CD14-positive monocyte (primary cell): ENCODE measurements at regions of chr19 and their contacts with region 1.

Region 1: DNA sequence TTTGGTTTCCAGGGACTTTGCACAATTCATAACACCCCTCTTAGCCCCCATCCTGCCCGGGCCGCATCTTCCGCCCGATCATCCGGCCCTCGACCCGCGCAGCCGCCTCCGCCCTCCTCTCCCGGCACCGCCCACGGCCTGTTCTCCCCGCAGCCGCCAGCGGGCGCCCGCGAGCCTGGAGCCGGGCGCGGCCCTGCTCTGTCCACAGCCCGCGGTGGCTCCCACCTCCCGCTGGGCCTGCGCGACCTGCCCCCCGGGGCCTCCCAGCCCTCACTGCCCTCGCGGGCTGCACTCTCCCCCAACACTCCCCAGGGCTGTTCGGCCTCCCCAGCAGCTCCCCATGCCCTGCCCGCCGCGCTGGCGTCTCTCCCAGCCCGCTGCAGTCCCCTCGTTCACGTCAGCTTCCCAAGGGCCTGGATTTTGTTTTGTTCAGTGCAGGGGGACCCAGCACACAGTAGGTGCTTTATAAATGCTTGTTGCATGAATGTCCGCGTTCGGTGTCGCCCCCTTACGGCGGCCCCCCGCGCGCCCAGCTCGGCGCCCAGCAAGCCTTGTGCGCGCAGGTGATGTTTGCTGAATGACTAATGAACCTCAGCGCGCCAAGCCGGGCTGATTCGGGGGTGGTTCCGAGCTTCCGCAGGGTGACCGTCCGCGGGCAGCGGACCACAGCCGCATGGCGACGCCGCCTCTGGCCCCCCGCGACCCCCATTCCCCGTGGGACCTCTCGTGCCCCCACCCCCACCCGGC is 4.6 kb upstream of the APC2 start:
- DNase-seq: peak; percentile 39 to 61 (median 59)
- H3K4me3 ChIP-seq: peak overlapping the region; percentile 1 to 74 (median 37)
- H3K4me3 Mint-ChIP-seq: peak overlapping the region; percentile 69 to 87
- H3K27ac ChIP-seq: no peak overlapping the region
- H3K27ac Mint-ChIP-seq: no peak overlapping the region
- H3K4me1 ChIP-seq: peaks cover 14 to 32% of the 10 kb centered on the region in 2 donors
- H3K4me1 Mint-ChIP-seq: peaks cover 20% of the 10 kb centered on the region
- H3K27me3 ChIP-seq: peaks cover 33 to 53% of the 10 kb centered on the region in 2 donors
- H3K27me3 Mint-ChIP-seq: peaks cover 40 to 65% (median 44%) of the 10 kb centered on the region in 3 donors
- CTCF ChIP-seq: peak; percentile 96

Region 2: DNA sequence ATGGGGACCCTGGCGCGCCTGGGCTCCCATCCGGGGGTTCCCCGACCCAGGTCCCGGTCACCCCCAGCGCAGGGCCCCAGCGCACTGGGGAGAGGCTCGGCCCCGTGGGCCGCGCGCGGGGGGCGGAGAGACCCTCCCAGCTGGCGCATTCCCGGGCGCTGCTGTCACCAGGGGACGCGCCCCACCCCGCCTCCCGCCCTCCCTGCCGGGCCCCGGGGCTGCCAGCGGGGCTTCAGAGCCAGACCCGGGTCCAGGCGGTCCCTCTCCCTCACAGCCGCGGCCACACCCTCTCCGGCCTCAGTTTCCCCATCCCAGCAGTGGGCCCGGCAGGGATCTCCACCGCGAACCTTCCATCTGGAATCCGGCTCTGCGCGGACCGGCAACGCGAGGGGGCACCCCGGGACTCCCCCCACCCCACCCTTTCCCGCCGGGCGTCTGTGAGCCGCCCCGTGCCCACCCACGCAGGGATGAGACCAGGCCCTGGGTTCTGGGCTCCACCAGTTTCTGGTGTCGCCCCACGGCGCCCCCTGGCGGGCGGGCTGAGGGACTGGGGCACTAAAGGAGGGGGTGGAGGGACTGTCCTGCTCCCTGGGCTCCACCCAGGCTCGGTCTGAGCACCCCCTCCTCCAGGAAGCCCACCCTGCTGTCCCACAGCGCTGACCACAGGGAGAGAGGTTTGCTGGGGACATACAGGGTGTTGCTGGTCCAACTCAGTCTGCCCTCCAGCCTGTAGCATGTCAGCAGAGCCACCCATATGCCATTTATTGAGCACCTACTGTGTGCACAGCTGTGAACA is 68.3 kb after region 1 on chr19:
- intact Hi-C with region 1: loop called in 1 of 2 experiments (anchors 10 kb)
- DNase-seq: peak; percentile 34 to 50 (median 49)
- H3K4me3 ChIP-seq: no peak overlapping the region
- H3K4me3 Mint-ChIP-seq: no peak overlapping the region
- H3K27ac ChIP-seq: no peak overlapping the region
- H3K27ac Mint-ChIP-seq: no peak overlapping the region
- H3K4me1 ChIP-seq: peaks cover 4 to 11% of the 10 kb centered on the region in 2 donors
- H3K4me1 Mint-ChIP-seq: peaks cover 8% of the 10 kb centered on the region
- H3K27me3 ChIP-seq: peaks cover 2 to 49% of the 10 kb centered on the region in 2 donors
- H3K27me3 Mint-ChIP-seq: peaks cover 38 to 78% (median 63%) of the 10 kb centered on the region in 3 donors
- CTCF ChIP-seq: peak; percentile 78